CD8-positive, alpha-beta T cell (primary cell): ENCODE measurements at regions of chr1 and their contacts with region 1.

Region 1: GRCh38 chr1:43828574-43828973 is 105.0 kb upstream of the ARTN start:
- DNase-seq: no peak
- ATAC-seq: no peak
- H3K4me3 ChIP-seq: no peak overlapping the region
- H3K4me3 Mint-ChIP-seq: no peak overlapping the region
- H3K27ac ChIP-seq: no peak overlapping the region
- H3K27ac Mint-ChIP-seq: no peak overlapping the region
- H3K4me1 ChIP-seq: peaks cover 23% of the 10 kb centered on the region
- H3K4me1 Mint-ChIP-seq: peaks cover 25% of the 10 kb centered on the region
- H3K27me3 ChIP-seq: no peaks in the 10 kb centered on the region
- H3K27me3 Mint-ChIP-seq: no peaks in the 10 kb centered on the region
- CTCF ChIP-seq: no peak

Region 2: DNA sequence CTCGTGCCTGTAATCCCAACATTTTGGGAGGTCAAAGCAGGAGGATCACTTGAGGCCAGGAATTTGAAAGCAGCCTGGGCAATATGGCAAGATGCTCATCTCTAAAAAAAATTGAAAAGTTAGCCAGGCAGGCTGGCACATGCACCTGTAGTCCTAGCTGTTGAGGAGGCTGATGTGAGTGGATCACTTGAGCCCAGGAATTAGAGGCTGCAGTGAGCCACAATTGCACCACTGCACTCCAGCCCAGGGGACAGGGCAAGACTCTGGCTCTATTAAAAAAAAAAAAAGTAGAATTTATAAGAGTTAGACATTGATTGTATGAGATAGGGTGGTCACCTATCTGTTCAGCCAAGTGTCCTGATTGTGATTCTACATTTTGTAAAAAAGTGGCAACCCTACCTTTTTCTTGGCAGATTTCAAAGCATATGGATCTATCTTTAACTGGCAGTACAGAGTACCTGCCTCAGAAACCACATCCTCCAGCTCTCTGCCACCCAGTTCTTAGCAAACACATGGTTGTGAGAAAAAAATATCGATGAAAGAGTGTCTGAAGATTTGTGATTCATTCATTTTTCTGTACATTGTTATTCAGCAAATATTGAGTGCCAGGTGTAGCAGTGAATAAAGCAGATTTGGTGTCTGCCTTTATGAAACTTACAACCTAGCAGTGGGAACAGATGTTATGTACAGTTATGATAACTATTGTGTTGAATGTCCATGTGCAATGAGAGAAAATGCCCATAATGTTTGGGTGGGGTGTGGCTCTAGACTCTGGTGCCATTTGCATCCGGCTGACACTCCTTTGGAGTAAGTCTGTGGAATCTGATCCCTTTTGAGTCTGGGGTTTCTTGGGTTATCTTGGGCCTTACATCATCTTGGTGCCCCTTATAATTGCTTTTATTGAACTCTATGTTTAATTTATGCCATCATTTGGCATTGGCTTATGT is 38.7 kb before region 1 on chr1:
- CTCF ChIA-PET with region 1: no interaction called
- POLR2A ChIA-PET with region 1: interaction called, 3 read pairs
- intact Hi-C with region 1: loop called in 1 of 2 experiments (anchors 2 kb)
- DNase-seq: peak in 5 of 9 experiments; percentile 4 to 44 (median 20)
- ATAC-seq: peak; percentile 84
- H3K4me3 ChIP-seq: no peak overlapping the region
- H3K4me3 Mint-ChIP-seq: no peak overlapping the region
- H3K27ac ChIP-seq: no peak overlapping the region
- H3K27ac Mint-ChIP-seq: no peak overlapping the region
- H3K4me1 ChIP-seq: peaks cover 16% of the 10 kb centered on the region
- H3K4me1 Mint-ChIP-seq: peaks cover 11% of the 10 kb centered on the region
- H3K27me3 ChIP-seq: no peaks in the 10 kb centered on the region
- H3K27me3 Mint-ChIP-seq: no peaks in the 10 kb centered on the region
- CTCF ChIP-seq: no peak

Region 3: DNA sequence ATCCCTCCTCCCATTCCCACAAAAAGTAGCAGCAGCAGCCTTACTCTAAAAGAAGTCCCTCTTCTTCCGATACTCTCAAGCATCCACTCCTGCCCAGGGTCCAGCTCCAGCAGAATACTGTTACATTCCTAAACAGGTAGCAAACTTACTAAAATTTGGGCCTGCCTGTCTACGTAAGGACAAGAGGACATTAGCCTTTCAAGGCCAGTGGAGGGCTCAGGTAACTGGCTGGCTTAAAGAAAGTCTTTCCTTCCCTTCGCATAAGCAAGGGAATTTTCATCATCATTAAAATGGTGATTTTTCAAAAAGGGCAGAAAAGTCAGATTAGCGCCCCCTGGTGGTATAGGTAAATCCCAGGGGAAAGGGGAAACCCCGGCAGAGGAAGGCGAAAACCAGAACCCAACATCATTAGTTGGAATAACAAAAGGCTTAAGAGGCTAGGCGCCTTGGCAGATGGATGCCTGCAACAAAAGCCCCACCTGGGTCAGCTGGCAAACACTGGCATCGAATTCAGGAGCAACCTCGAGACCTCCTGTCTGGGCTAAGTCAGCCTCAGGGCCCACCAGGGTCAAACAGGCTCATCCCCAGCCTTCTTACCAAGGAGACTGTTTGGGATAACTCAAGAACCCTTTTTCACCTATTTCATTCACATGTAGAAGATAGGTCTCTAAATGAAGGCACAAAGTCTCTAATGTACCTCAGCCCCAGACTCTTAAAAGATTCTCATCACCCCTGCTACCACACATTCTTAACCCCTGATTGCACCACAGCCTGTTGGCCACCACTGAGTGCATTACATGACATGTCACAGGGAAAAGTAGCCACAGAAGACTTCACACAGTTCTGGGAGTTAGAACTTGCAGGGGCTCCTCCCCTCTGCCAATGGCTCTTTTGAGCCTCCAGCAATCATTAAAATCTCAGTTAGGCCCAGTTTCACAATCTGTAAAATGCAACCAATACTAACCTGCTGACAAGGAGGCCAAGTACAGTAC is 489.8 kb after region 1 on chr1:
- CTCF ChIA-PET with region 1: no interaction called
- POLR2A ChIA-PET with region 1: no interaction called
- intact Hi-C with region 1: no loop called
- DNase-seq: peak in 8 of 9 experiments; percentile 12 to 67 (median 50)
- ATAC-seq: no peak
- H3K4me3 ChIP-seq: no peak overlapping the region
- H3K4me3 Mint-ChIP-seq: no peak overlapping the region
- H3K27ac ChIP-seq: no peak overlapping the region
- H3K27ac Mint-ChIP-seq: no peak overlapping the region
- H3K4me1 ChIP-seq: no peaks in the 10 kb centered on the region
- H3K4me1 Mint-ChIP-seq: peaks cover 5% of the 10 kb centered on the region
- H3K27me3 ChIP-seq: no peaks in the 10 kb centered on the region
- H3K27me3 Mint-ChIP-seq: no peaks in the 10 kb centered on the region
- CTCF ChIP-seq: peak; percentile 89